GM12878 (cell line): ENCODE measurements at regions of chr22 and their contacts with region 1.

Region 1: GRCh38 chr22:20156611-20157429 is 6.0 kb upstream of the CCDC188 start:
- DNase-seq: peak; percentile 17
- ATAC-seq: peak; percentile 94
- H3K4me3 ChIP-seq: no peak overlapping the region
- H3K27ac ChIP-seq: no peak overlapping the region
- H3K4me1 ChIP-seq: no peaks in the 10 kb centered on the region
- H3K27me3 ChIP-seq: peaks cover 1 to 2% of the 10 kb centered on the region in 2 experiments; a peak in 3 of 4 replicates
- CTCF ChIP-seq: peak; percentile 92 to 99 (median 98)
- EP300 ChIP-seq: no peak
- POLR2A ChIP-seq: no peak
- RAD21 ChIP-seq: peak; percentile 100

Region 2: DNA sequence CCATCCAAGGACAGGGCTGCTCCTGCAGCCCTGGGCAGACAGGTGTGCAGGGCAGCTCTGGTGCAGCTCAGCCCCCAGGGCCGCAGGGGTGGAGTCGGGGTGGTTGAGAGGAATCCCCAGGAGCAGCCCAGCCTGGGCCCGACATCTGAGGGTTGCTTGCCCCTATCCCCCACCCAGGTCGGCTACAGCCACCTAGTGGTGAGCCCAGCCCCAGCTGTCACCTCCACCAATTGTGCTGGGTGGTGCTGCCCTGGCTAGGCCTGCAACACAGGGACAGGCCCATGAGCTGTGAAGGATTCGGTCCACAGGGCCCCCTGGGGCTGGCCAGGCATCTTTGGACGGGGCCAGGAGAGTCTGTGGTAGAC is 81.7 kb after region 1 on chr22:
- CTCF ChIA-PET with region 1: interaction called, 29 read pairs
- POLR2A ChIA-PET with region 1: no interaction called
- RAD21 ChIA-PET with region 1: interaction called, 21 read pairs
- SMC1A ChIA-PET with region 1: interaction called, 4 read pairs
- in situ Hi-C with region 1: no loop called
- intact Hi-C with region 1: loop called (anchors 5 kb)
- DNase-seq: no peak
- ATAC-seq: peak; percentile 95
- H3K4me3 ChIP-seq: no peak overlapping the region
- H3K27ac ChIP-seq: peak overlapping the region; percentile 44; the same call in 1 of the 2 replicates
- H3K4me1 ChIP-seq: peaks cover 14% of the 10 kb centered on the region
- H3K27me3 ChIP-seq: no peaks in the 10 kb centered on the region; a peak in 1 of 4 replicates
- CTCF ChIP-seq: peak; percentile 73 to 77 (median 77)
- EP300 ChIP-seq: no peak
- POLR2A ChIP-seq: no peak
- RAD21 ChIP-seq: peak; percentile 69

Region 3: GRCh38 chr22:20268279-20269012 is 111.6 kb after region 1 on chr22 and contains the start of gene RTN4R:
- CTCF ChIA-PET with region 1: interaction called, 4 read pairs
- POLR2A ChIA-PET with region 1: no interaction called
- RAD21 ChIA-PET with region 1: interaction called, 4 read pairs
- SMC1A ChIA-PET with region 1: no interaction called
- in situ Hi-C with region 1: loop called (anchors 10 kb)
- intact Hi-C with region 1: loop called (anchors 5 kb)
- DNase-seq: no peak
- ATAC-seq: peak; percentile 95
- H3K4me3 ChIP-seq: no peak within 1 kb of the TSS
- H3K27ac ChIP-seq: no peak within 1 kb of the TSS
- H3K4me1 ChIP-seq: no peaks in the 10 kb centered on the region
- H3K27me3 ChIP-seq: no peaks in the 10 kb centered on the region; a peak in 1 of 4 replicates
- CTCF ChIP-seq: peak; percentile 60 to 74 (median 61); a peak in 5 of 6 replicates
- EP300 ChIP-seq: no peak
- POLR2A ChIP-seq: no peak
- RAD21 ChIP-seq: peak; percentile 82
- polyA plus RNA-seq, gene RTN4R: not detected

Region 4: DNA sequence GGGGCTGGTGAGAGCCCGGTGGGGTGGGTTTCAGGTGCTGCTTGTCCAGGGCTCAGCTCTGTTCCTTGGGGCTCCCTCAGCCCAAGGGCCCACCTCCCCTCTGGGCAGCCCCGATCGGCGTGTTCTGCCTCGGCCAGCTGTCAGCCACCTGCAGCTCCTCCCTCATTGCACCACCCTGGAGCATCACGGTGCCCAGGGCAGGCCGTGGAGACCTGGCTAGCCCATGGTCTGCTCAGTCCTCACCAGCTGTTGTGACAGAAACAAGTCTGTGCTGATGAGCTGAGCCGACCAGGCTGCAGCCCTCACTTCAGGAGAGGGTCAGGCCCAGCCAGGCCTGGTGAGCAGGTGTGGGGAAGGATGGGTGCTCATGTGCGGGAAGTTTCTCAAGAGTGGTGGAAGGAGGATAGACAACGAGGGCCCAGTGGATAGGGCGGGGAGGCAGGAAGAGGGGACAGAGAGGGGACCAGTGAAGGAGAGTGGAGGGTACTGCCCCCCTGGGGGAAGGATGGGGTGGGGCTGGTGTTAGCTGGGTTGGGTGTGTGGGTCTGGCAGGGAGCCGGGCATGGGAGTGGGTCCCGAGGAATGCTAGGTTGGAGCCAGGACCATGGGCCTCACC is 127.8 kb after region 1 on chr22:
- CTCF ChIA-PET with region 1: interaction called, 6 read pairs
- POLR2A ChIA-PET with region 1: no interaction called
- RAD21 ChIA-PET with region 1: interaction called, 6 read pairs
- SMC1A ChIA-PET with region 1: interaction called, 3 read pairs
- in situ Hi-C with region 1: no loop called
- intact Hi-C with region 1: loop called (anchors 1 kb)
- DNase-seq: no peak
- ATAC-seq: no peak
- H3K4me3 ChIP-seq: no peak overlapping the region
- H3K27ac ChIP-seq: no peak overlapping the region
- H3K4me1 ChIP-seq: no peaks in the 10 kb centered on the region
- H3K27me3 ChIP-seq: no peaks in the 10 kb centered on the region
- CTCF ChIP-seq: no peak
- EP300 ChIP-seq: no peak
- POLR2A ChIP-seq: no peak
- RAD21 ChIP-seq: no peak

Region 5: DNA sequence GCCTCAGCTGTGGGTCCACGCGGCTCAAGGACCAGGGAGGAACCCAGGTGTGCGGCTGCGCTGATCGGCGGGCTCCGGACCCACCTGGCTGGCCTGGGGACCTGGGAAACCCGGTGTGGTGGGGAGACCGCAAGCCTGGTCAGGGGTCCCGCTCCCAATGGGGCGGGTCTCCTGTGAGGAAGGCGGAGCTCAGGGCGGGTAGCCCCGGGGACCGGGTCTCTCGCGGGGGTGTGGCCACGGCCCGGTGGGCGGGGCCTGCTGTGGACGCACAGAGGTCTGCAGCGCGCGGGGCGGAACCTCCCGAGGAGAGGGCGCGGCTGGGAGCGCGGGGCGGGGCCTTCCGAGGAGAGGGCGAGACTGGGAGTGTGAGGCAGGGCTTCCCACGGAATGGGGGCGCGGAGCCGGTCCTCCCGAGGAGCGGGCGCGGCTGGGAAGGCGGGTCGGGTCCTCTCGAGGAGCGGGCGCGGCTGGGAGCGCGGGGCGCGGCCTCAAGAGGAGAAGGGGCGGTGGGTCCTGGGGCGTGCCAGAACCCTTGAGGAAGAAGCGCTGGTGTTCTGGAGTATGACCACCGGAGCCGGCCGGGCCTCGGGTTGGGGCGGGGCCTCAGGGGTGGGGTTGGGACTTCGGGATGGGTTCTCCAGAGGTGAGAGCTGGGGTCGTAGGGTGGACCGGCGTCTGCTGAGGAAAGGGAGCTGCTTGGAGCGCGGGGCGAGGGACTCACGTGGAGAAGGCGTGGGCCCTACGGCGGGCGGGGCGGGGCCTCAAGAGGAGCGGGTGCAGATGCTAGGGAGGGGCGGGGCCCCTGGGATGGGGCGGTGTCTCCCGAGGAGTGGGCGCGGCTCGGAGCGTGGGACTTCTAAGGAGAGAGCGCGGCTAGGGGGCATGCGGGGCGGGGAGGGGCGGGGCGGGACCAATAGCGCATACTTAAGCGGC is 142.2 kb after region 1 on chr22:
- CTCF ChIA-PET with region 1: interaction called, 3 read pairs
- POLR2A ChIA-PET with region 1: no interaction called
- RAD21 ChIA-PET with region 1: no interaction called
- SMC1A ChIA-PET with region 1: no interaction called
- in situ Hi-C with region 1: loop called (anchors 10 kb)
- intact Hi-C with region 1: no loop called
- DNase-seq: no peak
- ATAC-seq: peak; percentile 93
- H3K4me3 ChIP-seq: peak overlapping the region; percentile 65; the same call in 1 of the 2 replicates
- H3K27ac ChIP-seq: no peak overlapping the region
- H3K4me1 ChIP-seq: no peaks in the 10 kb centered on the region
- H3K27me3 ChIP-seq: no peaks in the 10 kb centered on the region; a peak in 2 of 4 replicates
- CTCF ChIP-seq: no peak
- EP300 ChIP-seq: no peak
- POLR2A ChIP-seq: no peak
- RAD21 ChIP-seq: no peak

Region 6: DNA sequence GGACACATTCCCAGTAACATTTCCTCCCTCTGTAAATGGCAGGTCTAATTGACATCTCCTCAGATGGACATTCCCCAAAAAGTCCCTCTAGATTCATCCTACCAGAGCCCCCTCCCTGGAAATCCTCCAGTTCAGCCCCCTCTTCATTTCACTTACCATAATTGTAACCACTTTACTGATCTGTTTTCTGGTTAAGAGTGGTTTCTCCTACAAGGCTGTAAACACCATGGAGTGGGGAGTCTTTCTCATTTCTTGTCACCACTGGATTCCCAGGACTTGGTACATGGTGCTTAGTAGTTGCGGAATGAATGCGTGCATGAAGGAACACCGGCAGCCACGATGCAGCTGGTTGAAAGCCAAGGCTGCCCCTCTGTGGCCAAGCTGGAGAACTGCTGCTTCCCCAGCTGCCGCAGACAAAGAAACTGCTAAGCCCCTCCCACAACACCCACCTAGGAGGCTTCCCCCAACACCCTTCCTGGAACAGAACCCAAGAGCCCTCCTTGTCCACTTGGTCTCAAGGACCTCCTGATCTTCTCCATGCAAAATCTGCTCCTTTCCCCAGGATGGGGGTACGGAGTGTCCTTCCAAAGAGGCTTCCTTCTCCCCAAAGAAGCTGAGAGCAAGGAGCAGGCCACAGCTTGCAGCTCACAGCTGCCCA is 299.4 kb after region 1 on chr22:
- CTCF ChIA-PET with region 1: no interaction called
- POLR2A ChIA-PET with region 1: no interaction called
- RAD21 ChIA-PET with region 1: no interaction called
- SMC1A ChIA-PET with region 1: interaction called, 3 read pairs
- in situ Hi-C with region 1: no loop called
- intact Hi-C with region 1: loop called (anchors 5 kb)
- DNase-seq: peak; percentile 44
- ATAC-seq: peak; percentile 99
- H3K4me3 ChIP-seq: no peak overlapping the region
- H3K27ac ChIP-seq: no peak overlapping the region
- H3K4me1 ChIP-seq: peaks cover 9% of the 10 kb centered on the region
- H3K27me3 ChIP-seq: no peaks in the 10 kb centered on the region
- CTCF ChIP-seq: peak; percentile 92 to 95 (median 95)
- EP300 ChIP-seq: no peak
- POLR2A ChIP-seq: no peak
- RAD21 ChIP-seq: peak; percentile 78

Region 7: DNA sequence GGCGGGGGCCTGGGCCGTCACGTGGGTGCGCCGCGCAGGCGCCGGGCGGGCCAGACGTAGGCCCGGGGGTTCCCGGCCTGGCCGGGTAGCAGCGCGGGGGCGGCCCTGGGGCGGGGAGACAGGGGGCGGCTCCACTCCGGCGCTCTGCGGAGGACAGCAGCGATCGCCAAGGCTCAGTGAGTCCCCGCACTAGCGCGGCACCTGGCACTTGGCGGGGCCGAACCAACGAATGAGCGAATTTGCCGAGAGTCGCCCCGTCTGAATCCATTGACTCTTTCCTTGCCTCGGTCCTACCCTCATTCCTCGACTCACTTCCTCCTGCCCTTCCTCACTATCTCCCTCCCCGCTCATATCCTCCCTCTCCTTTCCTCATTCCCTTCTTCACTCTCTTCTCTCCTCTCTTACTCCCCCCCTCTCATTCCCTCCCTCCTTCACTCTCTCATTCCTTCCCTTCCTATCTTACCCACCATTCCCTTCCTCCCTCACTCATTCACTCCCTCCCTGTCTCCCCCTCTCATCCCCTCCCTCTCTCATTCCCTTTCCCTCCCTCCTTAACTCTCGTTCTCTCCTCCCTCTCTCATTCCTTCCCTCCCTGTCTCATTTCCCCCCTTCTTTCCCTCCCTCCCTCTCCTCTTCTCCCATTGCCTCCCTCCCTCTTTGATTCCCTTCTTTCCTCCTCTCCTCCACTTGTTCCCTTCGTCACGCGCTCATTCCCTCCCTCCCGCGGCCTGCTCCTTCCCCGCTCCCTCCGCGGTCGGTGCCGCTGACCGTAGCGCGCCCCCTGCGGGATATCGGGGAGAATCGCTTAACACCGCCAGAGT is 339.3 kb after region 1 on chr22:
- CTCF ChIA-PET with region 1: no interaction called
- POLR2A ChIA-PET with region 1: no interaction called
- RAD21 ChIA-PET with region 1: no interaction called
- SMC1A ChIA-PET with region 1: no interaction called
- in situ Hi-C with region 1: no loop called
- intact Hi-C with region 1: loop called (anchors 5 kb)
- DNase-seq: peak; percentile 44
- ATAC-seq: peak; percentile 98
- H3K4me3 ChIP-seq: peak overlapping the region; percentile 60
- H3K27ac ChIP-seq: peak overlapping the region; percentile 34
- H3K4me1 ChIP-seq: peaks cover 10% of the 10 kb centered on the region; the same call in 1 of the 2 replicates
- H3K27me3 ChIP-seq: no peaks in the 10 kb centered on the region
- CTCF ChIP-seq: peak; percentile 88 to 90 (median 90)
- EP300 ChIP-seq: no peak
- POLR2A ChIP-seq: peak; percentile 68
- RAD21 ChIP-seq: peak; percentile 63